ENCODE measurements at regions of chr1 and their contacts with region 1.

Region 1: GRCh38 chr1:165914136-165914798 is 86.9 kb downstream of the UCK2 start:
- DNase-seq: no peak
- ATAC-seq: peak; percentile 81
- H3K4me3 ChIP-seq: no peak overlapping the region
- H3K27ac ChIP-seq: no peak overlapping the region
- H3K4me1 ChIP-seq: peaks cover 5% of the 10 kb centered on the region
- H3K27me3 ChIP-seq: no peaks in the 10 kb centered on the region
- CTCF ChIP-seq: peak; percentile 83

Region 2: GRCh38 chr1:165600793-165601192 is 313.5 kb before region 1 on chr1:
- intact Hi-C with region 1: loop called (anchors 10 kb)
- DNase-seq: no peak
- ATAC-seq: peak; percentile 62
- H3K4me3 ChIP-seq: no peak overlapping the region
- H3K27ac ChIP-seq: no peak overlapping the region
- H3K4me1 ChIP-seq: peaks cover 11% of the 10 kb centered on the region
- H3K27me3 ChIP-seq: no peaks in the 10 kb centered on the region
- CTCF ChIP-seq: no peak

Region 3: GRCh38 chr1:165686121-165686970 is 227.9 kb before region 1 on chr1:
- intact Hi-C with region 1: no loop called
- DNase-seq: no peak
- ATAC-seq: peak; percentile 75
- H3K4me3 ChIP-seq: no peak overlapping the region
- H3K27ac ChIP-seq: no peak overlapping the region
- H3K4me1 ChIP-seq: peaks cover 9% of the 10 kb centered on the region
- H3K27me3 ChIP-seq: no peaks in the 10 kb centered on the region
- CTCF ChIP-seq: no peak

Region 4: DNA sequence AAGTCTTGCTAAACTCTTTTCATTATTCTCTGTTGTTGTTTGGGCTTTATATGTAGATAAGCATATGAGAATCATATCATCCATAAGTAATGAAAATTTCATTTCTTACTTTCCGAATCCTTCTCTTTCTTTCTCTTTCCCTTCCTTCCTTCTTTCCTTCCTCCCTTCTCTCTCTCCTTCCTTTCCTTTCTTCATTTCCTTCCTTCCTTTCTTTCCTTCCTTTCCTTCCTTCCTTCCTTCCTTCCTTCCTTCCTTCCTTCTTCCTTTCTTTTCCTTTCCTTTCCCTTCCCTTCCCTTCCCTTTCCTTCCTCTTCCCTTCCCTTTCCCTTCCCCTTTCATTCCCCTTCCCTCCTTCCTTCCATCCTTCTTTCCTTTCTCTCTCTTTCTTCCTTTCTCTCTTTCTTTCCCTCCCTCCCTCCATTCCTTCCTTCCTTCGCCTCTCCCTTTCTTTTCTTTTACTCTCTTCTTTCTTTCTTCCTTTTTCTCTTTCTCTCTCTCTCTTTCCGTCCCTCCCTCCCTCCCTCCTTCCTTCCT is 60.4 kb after region 1 on chr1:
- intact Hi-C with region 1: no loop called
- DNase-seq: no peak
- ATAC-seq: no peak
- H3K4me3 ChIP-seq: no peak overlapping the region
- H3K27ac ChIP-seq: no peak overlapping the region
- H3K4me1 ChIP-seq: no peaks in the 10 kb centered on the region
- H3K27me3 ChIP-seq: no peaks in the 10 kb centered on the region
- CTCF ChIP-seq: no peak

Measured in upper lobe of right lung (tissue), 1 donor.